ENCODE measurements at regions of chr11 and their contacts with region 1.

Region 1: DNA sequence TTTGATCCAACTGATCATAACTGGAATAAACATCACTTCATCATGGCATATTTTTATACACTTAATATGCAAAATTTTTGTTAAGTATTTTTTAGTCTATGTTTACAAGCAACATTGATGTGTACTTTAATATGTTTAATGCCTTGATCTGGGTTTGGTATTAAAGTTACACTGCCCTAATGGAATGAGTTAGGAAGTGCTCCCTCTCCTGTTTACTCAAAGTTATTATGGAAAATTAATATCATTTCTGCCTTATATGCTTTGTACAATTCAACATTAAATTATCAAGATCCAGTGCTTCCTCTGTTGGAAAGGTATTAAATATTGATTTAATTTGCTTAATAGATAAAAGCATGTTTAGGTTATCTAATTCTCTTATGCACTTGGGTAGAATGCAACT is 927.3 kb upstream of the RAG2 start:
- DNase-seq: no peak
- H3K4me3 Mint-ChIP-seq: no peak overlapping the region
- H3K27ac Mint-ChIP-seq: no peak overlapping the region
- H3K4me1 Mint-ChIP-seq: no peaks in the 10 kb centered on the region
- H3K27me3 Mint-ChIP-seq: no peaks in the 10 kb centered on the region
- CTCF ChIP-seq: peak; percentile 30

Region 2: DNA sequence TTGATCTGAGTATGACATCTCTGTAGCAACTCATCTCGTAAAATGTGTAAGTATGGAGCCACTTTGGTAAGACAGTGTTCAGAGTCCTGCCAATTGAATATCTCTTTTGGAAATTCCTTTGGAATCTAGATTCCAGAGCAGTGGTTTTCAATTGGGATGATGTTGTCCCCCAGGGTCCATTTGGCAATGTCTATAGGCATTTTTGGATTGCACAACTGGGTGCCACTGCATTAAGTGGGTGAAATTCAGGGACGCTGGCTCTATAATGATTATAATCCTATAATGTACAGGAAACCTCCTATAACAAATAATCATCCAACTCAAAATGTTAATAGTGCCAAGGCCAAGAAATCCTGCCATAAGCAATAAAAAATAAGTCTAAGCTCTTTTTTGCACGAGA is 522.5 kb before region 1 on chr11:
- CTCF ChIA-PET with region 1: no interaction called
- POLR2A ChIA-PET with region 1: no interaction called
- intact Hi-C with region 1: loop called (anchors 5 kb)
- DNase-seq: no peak
- H3K4me3 Mint-ChIP-seq: no peak overlapping the region
- H3K27ac Mint-ChIP-seq: no peak overlapping the region
- H3K4me1 Mint-ChIP-seq: no peaks in the 10 kb centered on the region
- H3K27me3 Mint-ChIP-seq: no peaks in the 10 kb centered on the region
- CTCF ChIP-seq: no peak

Region 3: GRCh38 chr11:37422511-37422910 is 102.8 kb before region 1 on chr11:
- CTCF ChIA-PET with region 1: no interaction called
- POLR2A ChIA-PET with region 1: no interaction called
- intact Hi-C with region 1: no loop called
- DNase-seq: no peak
- H3K4me3 Mint-ChIP-seq: no peak overlapping the region
- H3K27ac Mint-ChIP-seq: no peak overlapping the region
- H3K4me1 Mint-ChIP-seq: no peaks in the 10 kb centered on the region
- H3K27me3 Mint-ChIP-seq: no peaks in the 10 kb centered on the region
- CTCF ChIP-seq: no peak

Measured in MCF 10A (cell line).